AG04449 (cell line): ENCODE measurements at regions of chr9 and their contacts with region 1.

Region 1: DNA sequence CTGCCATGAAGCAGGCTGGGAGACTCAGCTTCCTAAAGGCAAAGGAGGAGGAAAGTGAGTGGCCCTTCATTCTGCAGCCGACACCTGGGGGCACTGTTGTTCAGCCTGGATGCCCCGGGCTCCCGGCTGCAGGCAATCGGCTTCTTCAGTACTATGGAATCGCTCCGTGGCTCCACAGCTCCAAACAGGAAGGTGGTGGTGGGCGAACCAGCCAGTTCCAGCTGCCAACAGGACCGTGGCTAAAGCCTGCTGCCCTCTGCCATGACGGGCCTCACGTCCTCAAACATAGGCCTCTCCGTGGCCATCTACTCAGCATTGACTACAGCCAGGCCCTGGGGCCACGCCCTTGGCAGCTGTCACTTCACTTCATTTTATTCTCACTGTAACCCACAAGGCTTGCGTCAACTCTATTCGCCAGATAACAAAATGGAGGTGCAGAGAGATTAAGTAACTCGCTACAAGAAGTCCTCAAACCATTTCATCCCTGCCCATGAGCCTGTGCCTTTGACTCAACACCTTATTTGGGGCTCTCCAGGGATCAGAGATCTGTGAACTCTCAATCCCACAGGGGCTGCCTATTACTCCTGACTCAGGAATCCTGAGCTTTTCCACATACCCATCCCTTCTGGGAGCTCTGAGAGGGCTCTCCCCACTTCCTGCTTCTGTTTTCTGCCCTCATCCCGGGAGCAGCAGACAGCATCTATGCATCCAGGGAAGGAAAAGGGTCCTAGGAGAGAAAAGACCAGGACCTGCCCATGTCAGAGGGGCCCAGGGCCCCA is 38.0 kb downstream of the PAX5 start:
- DNase-seq: no peak
- H3K4me3 ChIP-seq: no peak overlapping the region
- CTCF ChIP-seq: peak; percentile 73

Region 2: DNA sequence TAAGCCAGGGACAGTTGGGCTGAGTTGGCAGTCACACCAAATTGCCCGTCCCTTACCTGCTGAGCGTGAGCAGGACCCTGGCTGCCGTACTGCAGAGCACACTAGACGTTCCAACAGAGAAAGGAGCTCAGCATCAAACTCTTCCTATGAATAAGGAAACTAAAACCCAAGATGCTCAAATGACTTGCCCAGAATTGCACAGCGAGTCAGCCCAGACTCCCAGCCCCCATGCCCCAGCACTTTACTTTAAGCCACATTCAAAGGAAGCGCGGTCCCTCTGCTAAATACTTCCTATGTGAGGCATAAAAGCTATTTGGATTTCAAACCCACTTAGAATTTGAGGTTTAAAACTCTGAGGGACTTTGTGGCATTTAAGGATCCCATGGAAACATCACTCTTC is 14.1 kb after region 1 on chr9:
- CTCF ChIA-PET with region 1: interaction called, 15 read pairs
- POLR2A ChIA-PET with region 1: no interaction called
- DNase-seq: no peak
- H3K4me3 ChIP-seq: no peak overlapping the region
- CTCF ChIP-seq: no peak

Region 3: DNA sequence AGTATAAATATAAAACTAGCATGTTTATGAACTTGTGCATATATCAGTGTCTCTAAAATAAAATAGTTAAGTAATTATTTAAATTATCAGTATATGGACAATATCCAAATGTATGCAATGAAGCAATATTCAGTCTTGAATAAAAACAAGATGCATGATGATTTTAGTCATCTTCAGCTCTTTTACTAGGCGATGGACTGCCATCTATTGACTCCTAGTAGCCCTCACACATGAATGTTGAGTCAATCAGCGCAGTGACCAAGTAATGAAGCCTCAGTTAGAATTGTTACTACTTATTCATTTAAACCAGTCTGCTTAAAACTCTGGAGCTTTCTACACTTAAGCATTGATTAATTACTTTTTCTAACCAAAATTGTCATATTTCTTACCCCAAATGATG is 333.5 kb after region 1 on chr9:
- CTCF ChIA-PET with region 1: interaction called, 25 read pairs
- POLR2A ChIA-PET with region 1: no interaction called
- DNase-seq: no peak
- H3K4me3 ChIP-seq: no peak overlapping the region
- CTCF ChIP-seq: peak; percentile 36